GM23248 (cell line): ENCODE measurements at regions of chr9 and their contacts with region 1.

Region 1: GRCh38 chr9:119556129-119556875 is 187.1 kb upstream of the BRINP1 start:
- DNase-seq: peak; percentile 83
- H3K4me3 ChIP-seq: peak overlapping the region; percentile 63
- H3K27ac ChIP-seq: no peak overlapping the region
- H3K4me1 ChIP-seq: no peaks in the 10 kb centered on the region
- H3K27me3 ChIP-seq: no peaks in the 10 kb centered on the region

Region 2: GRCh38 chr9:119968836-119969707 is 412.8 kb after region 1 on chr9:
- in situ Hi-C with region 1: loop called (anchors 25 kb)
- DNase-seq: peak; percentile 94
- H3K4me3 ChIP-seq: no peak overlapping the region
- H3K27ac ChIP-seq: no peak overlapping the region
- H3K4me1 ChIP-seq: peaks cover 21% of the 10 kb centered on the region
- H3K27me3 ChIP-seq: no peaks in the 10 kb centered on the region